ENCODE measurements at regions of chr2 and their contacts with region 1.

Region 1: DNA sequence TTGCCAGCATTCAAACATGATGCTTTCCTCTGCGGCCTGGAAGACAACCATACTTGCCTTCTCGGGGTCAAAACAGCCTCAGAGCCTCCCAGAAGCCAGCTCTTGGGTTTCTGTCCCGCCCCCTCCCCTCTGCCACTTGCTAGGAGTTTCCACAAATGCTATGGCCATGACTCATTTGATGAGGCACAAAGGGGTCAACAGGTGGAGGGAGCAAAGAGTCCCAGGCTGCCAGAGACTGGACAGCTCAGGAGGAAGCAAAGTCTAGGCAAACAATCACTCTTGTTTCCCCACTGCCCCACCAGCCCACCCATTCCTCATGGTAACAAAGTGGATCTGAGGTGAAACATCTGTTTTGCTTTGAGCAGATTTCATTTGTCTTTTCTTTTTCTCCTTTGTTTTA is 551.1 kb downstream of the TNS1 start:
- DNase-seq: peak; percentile 2
- H3K4me3 ChIP-seq: no peak overlapping the region
- H3K27ac ChIP-seq: no peak overlapping the region
- H3K4me1 ChIP-seq: no peaks in the 10 kb centered on the region
- H3K27me3 ChIP-seq: no peaks in the 10 kb centered on the region
- CTCF ChIP-seq: no peak
- POLR2A ChIP-seq: no peak

Region 2: DNA sequence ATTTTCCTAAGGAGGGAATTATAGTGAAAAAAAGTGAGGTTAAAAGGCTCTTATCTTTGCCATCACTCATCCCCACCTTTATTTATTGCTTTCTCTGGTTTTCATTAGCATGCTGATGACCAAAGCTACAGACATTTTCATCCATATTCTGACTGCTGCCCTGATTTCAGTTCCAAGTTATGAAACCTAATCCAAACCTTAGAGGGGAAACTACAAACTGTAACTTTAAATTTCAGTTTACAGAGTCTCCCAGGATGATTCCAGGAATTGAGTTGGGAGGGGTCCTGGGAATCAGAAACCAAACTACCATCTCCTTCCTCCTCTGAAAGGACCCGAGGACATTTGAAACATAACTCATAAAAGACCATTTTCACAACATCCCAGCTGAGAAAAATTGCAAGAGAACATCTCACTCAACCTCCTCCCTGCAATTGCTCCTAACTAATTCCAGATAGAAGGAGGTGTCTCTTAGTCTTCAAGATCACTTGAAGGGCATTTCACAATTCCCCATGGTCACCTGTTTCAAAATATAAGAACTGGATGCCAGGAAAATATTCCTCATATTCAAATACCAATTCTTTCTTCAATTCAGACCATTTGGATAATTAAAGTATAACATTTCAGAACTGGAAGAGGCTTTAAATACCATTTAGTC is 30.5 kb after region 1 on chr2:
- CTCF ChIA-PET with region 1: interaction called, 3 read pairs
- POLR2A ChIA-PET with region 1: no interaction called
- dilution Hi-C with region 1: no loop called
- intact Hi-C with region 1: loop called (anchors 1 kb)
- DNase-seq: no peak
- H3K4me3 ChIP-seq: no peak overlapping the region
- H3K27ac ChIP-seq: no peak overlapping the region
- H3K4me1 ChIP-seq: no peaks in the 10 kb centered on the region
- H3K27me3 ChIP-seq: no peaks in the 10 kb centered on the region
- CTCF ChIP-seq: no peak
- POLR2A ChIP-seq: no peak

Region 3: DNA sequence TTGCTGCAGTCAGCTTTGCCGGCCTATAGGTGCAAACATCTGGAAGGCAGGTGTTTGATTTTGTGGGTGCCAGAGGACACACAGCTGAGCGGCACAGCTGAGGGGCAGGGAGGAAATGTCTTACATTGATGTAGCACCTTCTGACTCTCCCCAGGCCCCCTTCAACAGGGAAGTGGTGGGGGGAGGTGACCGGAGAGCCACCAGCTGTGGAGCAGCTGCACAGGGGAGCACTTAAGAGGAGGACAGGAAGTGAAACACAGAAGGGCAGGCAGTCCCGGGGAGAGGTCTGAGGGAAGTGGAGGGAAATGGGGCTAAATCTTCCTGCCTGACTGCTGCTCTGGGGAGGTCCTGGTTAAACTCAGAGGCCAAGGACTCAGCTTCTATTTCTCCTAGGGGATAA is 142.1 kb after region 1 on chr2:
- CTCF ChIA-PET with region 1: no interaction called
- POLR2A ChIA-PET with region 1: no interaction called
- dilution Hi-C with region 1: no loop called
- intact Hi-C with region 1: no loop called
- DNase-seq: no peak
- H3K4me3 ChIP-seq: no peak overlapping the region
- H3K27ac ChIP-seq: no peak overlapping the region
- H3K4me1 ChIP-seq: no peaks in the 10 kb centered on the region
- H3K27me3 ChIP-seq: no peaks in the 10 kb centered on the region
- CTCF ChIP-seq: no peak
- POLR2A ChIP-seq: no peak

Measured in endothelial cell of umbilical vein (primary cell).